ENCODE measurements at regions of chr15 and their contacts with region 1.

Region 1: GRCh38 chr15:89772932-89773583 is 3.1 kb upstream of the MESP2 start:
- DNase-seq: no peak
- H3K4me3 ChIP-seq: no peak overlapping the region
- H3K4me3 Mint-ChIP-seq: no peak overlapping the region
- H3K27ac ChIP-seq: no peak overlapping the region
- H3K27ac Mint-ChIP-seq: peak overlapping the region in 1 of 8 donors; percentile 76
- H3K4me1 ChIP-seq: no peaks in the 10 kb centered on the region
- H3K4me1 Mint-ChIP-seq: peaks cover 0 to 4% (median 0%) of the 10 kb centered on the region in 3 donors
- H3K27me3 ChIP-seq: peaks cover 8% of the 10 kb centered on the region
- H3K27me3 Mint-ChIP-seq: peaks cover 10 to 17% of the 10 kb centered on the region in 2 donors

Region 2: DNA sequence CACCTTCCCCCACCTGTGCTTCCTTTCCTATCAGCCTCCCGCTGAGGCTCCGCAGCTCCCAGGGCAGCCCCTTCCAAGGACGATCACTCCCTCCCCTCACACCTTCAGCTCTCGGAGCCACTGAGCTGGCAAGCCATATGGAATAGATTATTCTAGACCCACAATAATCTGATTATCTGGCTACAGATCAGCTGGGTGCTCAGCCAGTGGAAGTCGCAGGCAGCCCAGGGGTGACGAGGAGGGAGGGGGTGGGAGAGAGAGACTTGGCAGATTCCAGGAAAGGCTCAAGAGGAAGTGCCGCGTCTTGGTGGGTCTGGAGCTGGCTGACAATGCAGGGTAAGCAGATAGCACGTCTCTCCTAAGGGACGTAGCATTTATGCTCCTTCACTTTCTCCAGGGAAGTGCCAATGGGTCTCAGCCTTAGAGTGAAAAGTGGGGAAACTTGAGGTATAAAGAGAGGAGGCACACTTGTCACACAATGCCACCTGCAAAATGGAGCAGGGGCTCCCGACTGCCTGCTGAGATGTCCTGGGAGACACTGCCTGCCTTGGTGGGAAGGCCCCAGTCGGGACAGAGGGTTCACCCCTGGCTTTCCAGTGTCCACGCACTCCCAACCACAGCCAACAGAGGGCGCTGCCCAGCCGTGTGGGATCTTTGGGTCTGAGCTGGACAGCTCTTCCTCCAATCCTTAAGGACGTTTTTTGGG is 12.6 kb before region 1 on chr15:
- CTCF ChIA-PET with region 1: interaction called, 13 read pairs
- POLR2A ChIA-PET with region 1: no interaction called
- DNase-seq: peak; percentile 17 to 67 (median 44)
- H3K4me3 ChIP-seq: no peak overlapping the region
- H3K4me3 Mint-ChIP-seq: no peak overlapping the region
- H3K27ac ChIP-seq: peak overlapping the region; percentile 38
- H3K27ac Mint-ChIP-seq: no peak overlapping the region
- H3K4me1 ChIP-seq: no peaks in the 10 kb centered on the region
- H3K4me1 Mint-ChIP-seq: no peaks in the 10 kb centered on the region
- H3K27me3 ChIP-seq: no peaks in the 10 kb centered on the region
- H3K27me3 Mint-ChIP-seq: peaks cover 4 to 12% of the 10 kb centered on the region in 2 donors

Measured in CD8-positive, alpha-beta memory T cell (primary cell).